ENCODE measurements at regions of chr10 and their contacts with region 1.

Region 1: DNA sequence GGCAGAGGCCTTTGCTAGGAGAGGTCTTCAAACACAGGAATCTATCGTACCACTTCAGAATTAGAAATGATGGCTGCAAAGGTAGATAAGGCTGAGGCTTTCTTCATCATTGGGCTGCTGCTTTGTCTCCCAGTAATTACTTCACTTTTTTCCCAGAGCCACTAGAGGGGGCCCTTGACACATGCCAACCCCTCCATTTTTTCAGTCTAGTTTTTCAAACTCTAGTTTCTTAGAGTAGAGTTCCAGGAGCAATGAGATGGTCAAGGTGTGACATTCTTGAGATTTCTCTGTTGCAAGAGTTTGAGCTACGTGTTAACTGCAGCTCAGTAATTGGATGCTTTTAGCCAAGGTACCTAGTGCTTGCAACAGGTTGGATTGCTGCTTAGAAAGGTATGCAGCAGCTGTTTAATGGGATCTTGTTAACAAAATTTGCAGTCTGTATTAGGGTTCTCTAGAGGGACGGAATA is 33.8 kb upstream of the RBM20 start:
- DNase-seq: peak; percentile 35
- H3K4me3 Mint-ChIP-seq: no peak overlapping the region
- H3K27ac Mint-ChIP-seq: no peak overlapping the region
- H3K4me1 Mint-ChIP-seq: peaks cover 44% of the 10 kb centered on the region
- H3K27me3 Mint-ChIP-seq: peaks cover 2% of the 10 kb centered on the region

Region 2: GRCh38 chr10:110643653-110644597 is 33.6 kb after region 1 on chr10 and contains the start of gene RBM20:
- intact Hi-C with region 1: loop called (anchors 2 kb)
- DNase-seq: no peak
- H3K4me3 Mint-ChIP-seq: peak within 1 kb of the TSS; percentile 85
- H3K27ac Mint-ChIP-seq: peak within 1 kb of the TSS; percentile 34
- H3K4me1 Mint-ChIP-seq: peaks cover 27% of the 10 kb centered on the region
- H3K27me3 Mint-ChIP-seq: peaks cover 66% of the 10 kb centered on the region
- total RNA-seq, gene RBM20: not detected in 2 replicates

Region 3: DNA sequence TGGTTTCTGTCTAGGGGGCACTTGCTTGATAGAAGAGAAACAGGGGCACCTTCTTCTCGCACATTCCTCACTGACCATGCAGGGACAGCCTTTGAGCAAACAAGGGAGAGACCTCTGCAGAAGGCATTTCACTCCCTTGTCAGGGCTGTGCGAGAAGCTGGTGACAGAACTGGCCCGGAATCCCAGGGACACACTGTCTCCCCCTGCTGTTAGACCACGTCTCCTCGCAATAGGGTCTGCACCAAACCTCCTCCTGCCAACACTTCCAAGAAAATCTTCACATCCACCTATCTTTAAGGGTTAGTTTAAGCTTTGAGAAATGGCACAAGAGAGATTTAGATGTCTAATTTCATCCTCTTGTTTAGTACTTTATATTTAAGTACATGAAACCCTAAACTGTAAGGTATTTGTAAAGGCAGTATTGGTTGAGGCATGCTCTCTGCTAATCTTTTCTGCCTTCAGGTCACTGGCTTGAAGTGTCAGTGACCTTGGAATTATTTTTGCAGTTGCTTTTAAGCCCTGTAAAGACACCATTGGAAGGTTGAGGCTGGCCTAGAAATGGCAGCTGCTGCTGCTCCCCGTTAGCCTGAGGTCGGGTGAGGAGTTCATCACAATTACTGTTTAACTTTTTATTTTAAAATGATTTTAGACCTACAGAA is 70.8 kb after region 1 on chr10:
- intact Hi-C with region 1: loop called (anchors 1 kb)
- DNase-seq: no peak
- H3K4me3 Mint-ChIP-seq: no peak overlapping the region
- H3K27ac Mint-ChIP-seq: no peak overlapping the region
- H3K4me1 Mint-ChIP-seq: peaks cover 6% of the 10 kb centered on the region
- H3K27me3 Mint-ChIP-seq: peaks cover 18% of the 10 kb centered on the region

Region 4: GRCh38 chr10:110864662-110865140 is 254.4 kb after region 1 on chr10:
- intact Hi-C with region 1: loop called (anchors 10 kb)
- DNase-seq: peak; percentile 69
- H3K4me3 Mint-ChIP-seq: peak overlapping the region; percentile 75
- H3K27ac Mint-ChIP-seq: peak overlapping the region; percentile 95
- H3K4me1 Mint-ChIP-seq: peaks cover 96% of the 10 kb centered on the region
- H3K27me3 Mint-ChIP-seq: no peaks in the 10 kb centered on the region

Region 5: DNA sequence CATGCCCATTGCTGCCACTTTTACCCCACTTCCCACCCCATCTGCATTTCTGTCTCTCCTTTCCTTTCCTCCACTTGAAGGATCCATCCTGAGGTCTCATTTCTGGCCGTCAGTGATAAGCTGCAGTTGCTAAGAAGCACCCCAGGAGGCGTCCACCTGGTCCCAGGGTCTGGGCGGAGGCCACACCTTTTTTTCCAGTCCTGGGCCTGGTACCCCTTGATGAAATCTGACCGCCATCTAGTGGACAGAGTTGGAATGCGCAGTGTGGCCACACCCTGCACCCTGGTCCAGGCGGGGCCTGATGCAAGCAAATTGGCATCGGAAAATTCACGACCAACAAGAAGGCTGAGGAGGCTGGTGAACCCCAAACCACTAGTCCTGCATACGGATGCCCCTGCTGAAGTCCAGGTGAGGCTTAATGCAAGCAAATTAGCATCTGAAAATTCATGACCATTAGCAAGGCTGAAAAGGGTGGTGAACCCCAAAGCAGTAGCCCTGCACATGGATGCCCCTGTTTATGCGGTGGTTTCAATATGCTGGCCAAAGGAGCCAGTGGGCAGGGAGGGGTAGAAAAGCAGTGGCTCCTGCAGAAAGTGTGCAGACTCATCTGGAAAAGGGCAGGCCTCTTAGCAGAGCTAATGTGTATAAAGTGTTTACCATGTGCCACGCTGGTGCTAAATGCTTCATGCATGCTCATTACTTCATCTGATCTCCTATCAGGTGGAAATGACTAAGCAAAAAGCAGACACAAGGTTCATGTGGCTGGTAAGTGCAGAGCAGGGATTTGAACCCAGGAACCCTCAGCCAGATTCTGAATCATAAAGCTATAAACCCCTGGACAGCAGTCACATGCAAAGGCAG is 1530.0 kb after region 1 on chr10:
- intact Hi-C with region 1: loop called (anchors 10 kb)
- DNase-seq: peak; percentile 55
- H3K4me3 Mint-ChIP-seq: no peak overlapping the region
- H3K27ac Mint-ChIP-seq: no peak overlapping the region
- H3K4me1 Mint-ChIP-seq: no peaks in the 10 kb centered on the region
- H3K27me3 Mint-ChIP-seq: peaks cover 7% of the 10 kb centered on the region

Measured in activated T-helper 1 cell treated with anti-CD3 and anti-CD28 coated beads, Interleukin-12 subunit alpha, Interleukin-12 subunit beta, Interleukin-2, Interleukin-4 antibody, amounts not matched to agents 30 ng/mL and 10 ng/mL and 1 ng/mL, durations not matched to agents 14 hours and 24 hours and 36 hours (primary cell).